ENCODE measurements at regions of chr5 and their contacts with region 1.

Region 1: GRCh38 chr5:69093771-69094482 is at the start of gene SLC30A5:
- DNase-seq: peak; percentile 100
- H3K4me3 ChIP-seq: peak within 1 kb of the TSS; percentile 67 to 97 (median 83)
- H3K27ac ChIP-seq: peak within 1 kb of the TSS; percentile 92 to 97 (median 96)
- H3K4me1 ChIP-seq: peaks cover 4 to 50% (median 32%) of the 10 kb centered on the region in 6 donors
- H3K27me3 ChIP-seq: no peaks in the 10 kb centered on the region
- CTCF ChIP-seq: peak; percentile 93 to 100 (median 98)
- POLR2A ChIP-seq: peak in 2 of 3 donors; percentile 12 to 94
- total RNA-seq, gene SLC30A5: 30.3 to 53.4 (median 38.3) TPM

Region 2: DNA sequence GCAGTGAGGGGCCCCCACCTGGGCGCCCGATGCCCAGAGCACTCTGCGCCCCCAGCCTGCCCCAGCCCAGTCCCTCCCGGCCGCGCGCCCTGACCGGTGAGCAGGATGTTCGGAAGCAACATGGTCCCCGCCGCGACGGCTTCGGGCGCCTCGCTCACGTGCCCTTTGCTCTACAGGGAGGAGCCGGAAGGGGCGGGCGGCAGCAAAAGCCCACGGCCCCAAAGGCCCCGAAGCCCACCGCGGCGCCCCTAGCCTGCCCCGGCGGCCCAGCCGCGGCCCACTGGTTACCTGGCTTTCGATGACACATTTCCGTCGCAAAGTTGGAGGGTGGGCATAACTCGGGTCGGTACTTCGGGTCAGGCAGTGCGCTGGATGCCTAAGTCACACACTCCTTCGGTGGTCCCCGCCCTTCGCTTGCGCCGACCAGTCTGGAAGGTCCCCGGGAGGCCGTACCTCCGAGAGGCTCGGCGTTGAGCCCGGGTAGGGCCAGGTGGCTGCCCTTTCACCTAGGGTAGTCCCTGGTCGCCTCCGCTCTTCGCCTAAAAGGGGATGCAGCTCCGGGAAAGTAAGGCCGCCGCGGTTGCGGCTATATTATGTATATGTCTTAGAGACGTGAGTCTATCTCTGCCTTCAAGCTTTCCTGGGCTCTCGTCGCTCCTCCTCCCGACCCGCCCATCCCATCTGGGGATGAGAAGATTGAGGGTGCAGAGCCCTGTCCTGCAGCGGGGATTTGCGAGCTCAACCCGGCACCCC is 275.6 kb after region 1 on chr5 and contains the starts of genes AK6, RAD17 and TAF9:
- intact Hi-C with region 1: loop called (anchors 10 kb)
- DNase-seq: peak; percentile 99
- H3K4me3 ChIP-seq: peak within 1 kb of the TSS; percentile 54 to 97 (median 88)
- H3K27ac ChIP-seq: peak within 1 kb of the TSS; percentile 96 to 100 (median 98)
- H3K4me1 ChIP-seq: peaks cover 21 to 76% (median 50%) of the 10 kb centered on the region in 6 donors
- H3K27me3 ChIP-seq: no peaks in the 10 kb centered on the region
- CTCF ChIP-seq: peak in 4 of 11 experiments; percentile 6 to 22 (median 14)
- POLR2A ChIP-seq: peak; percentile 21 to 62 (median 58)
- total RNA-seq, gene AK6: 16.9 to 31.7 (median 24.0) TPM
- total RNA-seq, gene RAD17: 15.2 to 28.5 (median 21.4) TPM
- total RNA-seq, gene TAF9: 33.5 to 38.9 (median 36.2) TPM

Measured in spleen (tissue), 13 donors.